ENCODE measurements at regions of chr10 and their contacts with region 1.

Region 1: GRCh38 chr10:470338-470999 is 219.0 kb downstream of the DIP2C start:
- DNase-seq: peak; percentile 71 to 82 (median 78)
- H3K4me3 ChIP-seq: peak overlapping the region in 1 of 2 donors; percentile 40
- H3K4me3 Mint-ChIP-seq: peak overlapping the region; percentile 57 to 87 (median 79)
- H3K27ac ChIP-seq: peak overlapping the region; percentile 32
- H3K27ac Mint-ChIP-seq: peak overlapping the region; percentile 75 to 93 (median 91)
- H3K4me1 ChIP-seq: peaks cover 35% of the 10 kb centered on the region
- H3K4me1 Mint-ChIP-seq: peaks cover 23 to 40% (median 32%) of the 10 kb centered on the region in 4 donors
- H3K27me3 ChIP-seq: no peaks in the 10 kb centered on the region
- H3K27me3 Mint-ChIP-seq: no peaks in the 10 kb centered on the region

Region 2: DNA sequence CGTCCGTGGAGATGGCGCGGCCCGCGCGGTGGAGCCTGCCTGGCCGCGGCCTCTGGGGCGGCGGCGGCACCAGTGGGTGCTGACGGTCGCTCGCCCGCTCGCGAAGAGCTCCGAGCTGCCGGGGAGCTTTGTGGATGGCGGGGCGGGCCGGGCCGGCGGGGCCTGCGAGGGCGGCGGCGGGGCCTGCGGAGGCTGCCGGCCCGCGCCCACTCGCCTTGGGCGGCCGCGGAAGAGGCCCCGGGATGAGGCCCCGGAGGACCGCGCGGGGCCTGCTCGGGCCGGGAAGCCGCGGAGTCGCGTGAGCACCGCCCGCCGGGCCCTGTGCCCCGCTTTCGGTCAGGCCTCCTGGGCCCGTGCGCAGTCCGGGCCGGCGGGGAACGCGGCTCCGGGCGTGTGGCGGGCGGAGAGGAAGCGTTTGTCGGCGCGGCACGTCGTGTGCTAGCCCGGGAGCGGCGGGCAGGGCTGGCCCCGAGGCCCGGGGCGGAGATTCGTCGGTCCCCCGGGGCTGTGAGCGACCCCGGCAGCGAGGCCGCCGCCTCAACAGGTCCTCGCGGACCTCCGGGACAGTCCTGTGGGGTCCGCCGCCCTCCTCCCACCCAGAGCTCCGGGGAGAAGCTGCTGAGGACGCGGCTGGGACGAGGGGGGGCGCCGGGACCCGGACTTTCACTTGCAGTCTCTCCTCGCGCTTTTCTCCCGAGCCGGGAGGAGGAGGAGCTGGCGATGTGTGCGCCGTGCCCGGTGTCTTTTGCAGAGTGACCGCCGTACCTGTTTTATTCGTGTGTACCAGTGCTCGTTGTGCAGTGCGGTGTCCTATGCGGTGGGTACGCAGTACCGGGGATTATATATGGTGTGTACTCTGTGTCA is 334.6 kb before region 1 on chr10:
- CTCF ChIA-PET with region 1: no interaction called
- POLR2A ChIA-PET with region 1: no interaction called
- intact Hi-C with region 1: loop called (anchors 1 kb)
- DNase-seq: peak; percentile 58 to 72 (median 66)
- H3K4me3 ChIP-seq: peak overlapping the region; percentile 51 to 52
- H3K4me3 Mint-ChIP-seq: peak overlapping the region; percentile 89 to 96 (median 92)
- H3K27ac ChIP-seq: peak overlapping the region; percentile 80
- H3K27ac Mint-ChIP-seq: peak overlapping the region; percentile 90 to 96 (median 93)
- H3K4me1 ChIP-seq: peaks cover 32% of the 10 kb centered on the region
- H3K4me1 Mint-ChIP-seq: peaks cover 29 to 47% (median 38%) of the 10 kb centered on the region in 4 donors
- H3K27me3 ChIP-seq: no peaks in the 10 kb centered on the region
- H3K27me3 Mint-ChIP-seq: no peaks in the 10 kb centered on the region

Region 3: GRCh38 chr10:279655-280054 is 190.8 kb before region 1 on chr10:
- CTCF ChIA-PET with region 1: no interaction called
- POLR2A ChIA-PET with region 1: no interaction called
- intact Hi-C with region 1: loop called (anchors 5 kb)
- DNase-seq: no peak
- H3K4me3 ChIP-seq: no peak overlapping the region
- H3K4me3 Mint-ChIP-seq: no peak overlapping the region
- H3K27ac ChIP-seq: no peak overlapping the region
- H3K27ac Mint-ChIP-seq: peak overlapping the region in 2 of 7 donors; percentile 47 to 77
- H3K4me1 ChIP-seq: peaks cover 9% of the 10 kb centered on the region
- H3K4me1 Mint-ChIP-seq: peaks cover 10 to 18% (median 11%) of the 10 kb centered on the region in 4 donors
- H3K27me3 ChIP-seq: no peaks in the 10 kb centered on the region
- H3K27me3 Mint-ChIP-seq: no peaks in the 10 kb centered on the region

Region 4: GRCh38 chr10:329361-330099 is 140.9 kb before region 1 on chr10:
- CTCF ChIA-PET with region 1: interaction called, 3 read pairs
- POLR2A ChIA-PET with region 1: interaction called, 8 read pairs
- intact Hi-C with region 1: loop called (anchors 1 kb)
- DNase-seq: peak in 4 of 5 donors; percentile 15 to 51 (median 28)
- H3K4me3 ChIP-seq: peak overlapping the region in 1 of 2 donors; percentile 38
- H3K4me3 Mint-ChIP-seq: peak overlapping the region; percentile 63 to 82 (median 76)
- H3K27ac ChIP-seq: peak overlapping the region; percentile 20
- H3K27ac Mint-ChIP-seq: peak overlapping the region; percentile 26 to 89 (median 81)
- H3K4me1 ChIP-seq: peaks cover 40% of the 10 kb centered on the region
- H3K4me1 Mint-ChIP-seq: peaks cover 23 to 50% (median 42%) of the 10 kb centered on the region in 4 donors
- H3K27me3 ChIP-seq: no peaks in the 10 kb centered on the region
- H3K27me3 Mint-ChIP-seq: no peaks in the 10 kb centered on the region

Region 5: GRCh38 chr10:373522-374309 is 96.8 kb before region 1 on chr10:
- CTCF ChIA-PET with region 1: no interaction called
- POLR2A ChIA-PET with region 1: no interaction called
- intact Hi-C with region 1: no loop called
- DNase-seq: no peak
- H3K4me3 ChIP-seq: no peak overlapping the region
- H3K4me3 Mint-ChIP-seq: no peak overlapping the region
- H3K27ac ChIP-seq: no peak overlapping the region
- H3K27ac Mint-ChIP-seq: no peak overlapping the region
- H3K4me1 ChIP-seq: no peaks in the 10 kb centered on the region
- H3K4me1 Mint-ChIP-seq: peaks cover 0 to 4% (median 1%) of the 10 kb centered on the region in 4 donors
- H3K27me3 ChIP-seq: no peaks in the 10 kb centered on the region
- H3K27me3 Mint-ChIP-seq: peaks cover 0 to 3% of the 10 kb centered on the region in 2 donors

Region 6: DNA sequence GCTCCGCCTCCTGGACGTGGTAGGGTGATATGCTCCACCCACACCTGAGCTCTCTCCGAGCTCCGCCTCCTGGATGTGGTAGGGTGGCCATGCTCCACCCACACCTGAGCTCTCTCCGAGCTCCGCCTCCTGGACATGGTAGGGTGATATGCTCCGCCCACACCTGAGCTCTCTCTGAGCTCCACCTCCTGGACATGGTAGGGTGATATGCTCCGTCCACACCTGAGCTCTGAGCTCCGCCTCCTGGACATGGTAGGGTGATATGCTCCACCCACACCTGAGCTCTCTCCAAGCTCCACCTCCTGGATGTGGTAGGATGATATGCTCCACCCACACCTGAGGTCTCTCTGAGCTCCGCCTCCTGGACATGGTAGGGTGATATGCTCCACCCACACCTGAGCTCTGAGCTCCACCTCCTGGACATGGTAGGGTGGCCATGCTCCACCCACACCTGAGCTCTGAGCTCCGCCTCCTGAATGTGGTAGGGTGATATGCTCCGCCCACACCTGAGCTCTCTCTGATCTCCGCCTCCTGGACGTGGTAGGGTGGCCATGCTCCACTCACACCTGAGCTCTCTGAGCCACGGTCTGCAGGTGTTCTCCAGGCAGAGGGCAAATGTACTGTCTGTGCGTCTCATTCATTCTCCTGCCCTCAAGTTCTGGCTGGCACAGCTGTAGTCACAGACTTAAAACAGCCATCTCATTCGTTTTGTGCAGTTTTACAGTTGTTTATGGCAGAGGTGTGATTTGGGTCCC is 33.4 kb before region 1 on chr10:
- CTCF ChIA-PET with region 1: interaction called, 3 read pairs
- POLR2A ChIA-PET with region 1: interaction called, 12 read pairs
- intact Hi-C with region 1: loop called (anchors 5 kb)
- DNase-seq: peak in 3 of 5 donors; percentile 31 to 62 (median 45)
- H3K4me3 ChIP-seq: no peak overlapping the region
- H3K4me3 Mint-ChIP-seq: peak overlapping the region; percentile 32 to 80 (median 69)
- H3K27ac ChIP-seq: no peak overlapping the region
- H3K27ac Mint-ChIP-seq: peak overlapping the region; percentile 74 to 96 (median 85)
- H3K4me1 ChIP-seq: peaks cover 60% of the 10 kb centered on the region
- H3K4me1 Mint-ChIP-seq: peaks cover 33 to 66% (median 51%) of the 10 kb centered on the region in 4 donors
- H3K27me3 ChIP-seq: no peaks in the 10 kb centered on the region
- H3K27me3 Mint-ChIP-seq: no peaks in the 10 kb centered on the region

Region 7: GRCh38 chr10:484441-484924 is 14.0 kb after region 1 on chr10:
- CTCF ChIA-PET with region 1: interaction called, 3 read pairs
- POLR2A ChIA-PET with region 1: no interaction called
- intact Hi-C with region 1: loop called (anchors 1 kb)
- DNase-seq: peak in 3 of 5 donors; percentile 30 to 41 (median 35)
- H3K4me3 ChIP-seq: peak overlapping the region in 1 of 2 donors; percentile 40
- H3K4me3 Mint-ChIP-seq: peak overlapping the region; percentile 82 to 94 (median 90)
- H3K27ac ChIP-seq: peak overlapping the region; percentile 72
- H3K27ac Mint-ChIP-seq: peak overlapping the region; percentile 92 to 98 (median 94)
- H3K4me1 ChIP-seq: no peaks in the 10 kb centered on the region
- H3K4me1 Mint-ChIP-seq: peaks cover 6 to 30% (median 19%) of the 10 kb centered on the region in 4 donors
- H3K27me3 ChIP-seq: no peaks in the 10 kb centered on the region
- H3K27me3 Mint-ChIP-seq: peaks cover 2% of the 10 kb centered on the region in 2 donors

Region 8: GRCh38 chr10:571688-572451 is 101.4 kb after region 1 on chr10:
- CTCF ChIA-PET with region 1: no interaction called
- POLR2A ChIA-PET with region 1: no interaction called
- intact Hi-C with region 1: no loop called
- DNase-seq: no peak
- H3K4me3 ChIP-seq: no peak overlapping the region
- H3K4me3 Mint-ChIP-seq: no peak overlapping the region
- H3K27ac ChIP-seq: no peak overlapping the region
- H3K27ac Mint-ChIP-seq: no peak overlapping the region
- H3K4me1 ChIP-seq: no peaks in the 10 kb centered on the region
- H3K4me1 Mint-ChIP-seq: no peaks in the 10 kb centered on the region
- H3K27me3 ChIP-seq: no peaks in the 10 kb centered on the region
- H3K27me3 Mint-ChIP-seq: peaks cover 12 to 20% of the 10 kb centered on the region in 2 donors

Measured in CD4-positive, alpha-beta memory T cell (primary cell).